ENCODE measurements at regions of chr4 and their contacts with region 1.

Region 1: DNA sequence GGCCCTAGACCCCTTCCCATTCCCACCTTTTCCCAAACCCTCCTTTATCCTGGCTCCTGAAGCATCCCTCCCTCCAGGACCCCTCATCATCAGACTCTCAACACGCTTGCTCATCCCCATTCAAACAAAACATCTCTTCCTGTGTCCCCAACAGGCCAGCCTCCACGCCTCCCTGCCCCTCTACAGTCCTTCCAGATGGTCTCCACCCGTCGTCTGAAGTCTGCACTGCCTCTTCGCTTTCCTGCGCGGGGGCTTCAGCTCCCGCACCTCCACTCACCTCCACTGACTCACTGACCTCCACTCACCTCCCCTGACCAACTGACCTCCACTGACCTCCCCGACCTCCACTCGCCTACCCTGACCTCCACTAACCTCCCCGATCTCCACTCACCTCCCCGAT is 39.8 kb downstream of the JAKMIP1 start:
- DNase-seq: no peak
- H3K4me3 ChIP-seq: no peak overlapping the region
- H3K27ac ChIP-seq: no peak overlapping the region
- H3K4me1 ChIP-seq: no peaks in the 10 kb centered on the region
- H3K27me3 ChIP-seq: no peaks in the 10 kb centered on the region
- CTCF ChIP-seq: no peak

Region 2: DNA sequence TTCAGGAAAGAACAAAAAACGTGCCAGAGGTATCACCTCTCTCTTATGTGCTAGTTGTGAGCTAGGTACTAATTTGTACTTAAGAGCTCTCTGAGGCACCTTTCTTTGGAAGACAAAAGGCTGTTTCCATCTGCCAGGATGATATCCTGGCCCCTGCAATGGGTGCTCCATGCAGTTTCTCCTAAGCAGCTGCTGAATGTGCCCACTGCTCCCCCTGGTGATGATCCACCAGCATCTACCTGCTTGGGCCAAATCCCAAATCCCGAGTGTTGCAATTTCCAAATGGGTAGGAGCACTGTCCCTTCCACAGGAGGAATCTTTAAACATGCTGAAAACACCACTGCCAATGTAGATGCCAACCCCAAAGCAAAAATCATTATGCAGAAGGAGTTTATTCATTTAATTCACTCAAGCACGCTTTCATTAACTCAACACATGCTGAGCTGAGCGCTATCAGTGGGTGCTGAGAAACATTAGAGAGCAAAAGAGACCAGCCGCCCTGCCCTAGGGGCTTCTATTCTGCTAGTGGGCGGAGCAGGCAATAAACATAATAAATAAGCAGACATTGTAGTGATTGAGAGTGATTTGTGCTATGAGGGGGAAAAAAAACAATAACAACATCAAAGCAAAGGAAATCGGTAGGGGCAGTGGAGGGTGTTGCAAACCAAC is 72.7 kb before region 1 on chr4:
- CTCF ChIA-PET with region 1: no interaction called
- dilution Hi-C with region 1: loop called (anchors 5 kb)
- in situ Hi-C with region 1: no loop called
- intact Hi-C with region 1: no loop called
- DNase-seq: no peak
- H3K4me3 ChIP-seq: no peak overlapping the region
- H3K27ac ChIP-seq: no peak overlapping the region
- H3K4me1 ChIP-seq: no peaks in the 10 kb centered on the region
- H3K27me3 ChIP-seq: no peaks in the 10 kb centered on the region
- CTCF ChIP-seq: peak in 1 of 2 donors; percentile 18

Region 3: GRCh38 chr4:6180841-6181631 is 20.5 kb after region 1 on chr4:
- CTCF ChIA-PET with region 1: no interaction called
- dilution Hi-C with region 1: no loop called
- in situ Hi-C with region 1: no loop called
- intact Hi-C with region 1: no loop called
- DNase-seq: no peak
- H3K4me3 ChIP-seq: no peak overlapping the region
- H3K27ac ChIP-seq: no peak overlapping the region
- H3K4me1 ChIP-seq: no peaks in the 10 kb centered on the region
- H3K27me3 ChIP-seq: no peaks in the 10 kb centered on the region
- CTCF ChIP-seq: no peak

Region 4: GRCh38 chr4:6209921-6210320 is 49.4 kb after region 1 on chr4:
- CTCF ChIA-PET with region 1: no interaction called
- dilution Hi-C with region 1: loop called (anchors 5 kb)
- in situ Hi-C with region 1: no loop called
- intact Hi-C with region 1: no loop called
- DNase-seq: no peak
- H3K4me3 ChIP-seq: no peak overlapping the region
- H3K27ac ChIP-seq: no peak overlapping the region
- H3K4me1 ChIP-seq: no peaks in the 10 kb centered on the region
- H3K27me3 ChIP-seq: no peaks in the 10 kb centered on the region
- CTCF ChIP-seq: no peak

Region 5: GRCh38 chr4:6221851-6222760 is 61.6 kb after region 1 on chr4:
- CTCF ChIA-PET with region 1: no interaction called
- dilution Hi-C with region 1: no loop called
- in situ Hi-C with region 1: no loop called
- intact Hi-C with region 1: no loop called
- DNase-seq: peak; percentile 5
- H3K4me3 ChIP-seq: no peak overlapping the region
- H3K27ac ChIP-seq: no peak overlapping the region
- H3K4me1 ChIP-seq: no peaks in the 10 kb centered on the region
- H3K27me3 ChIP-seq: no peaks in the 10 kb centered on the region
- CTCF ChIP-seq: no peak

Measured in mammary epithelial cell (primary cell).